Activated naive CD4-positive, alpha-beta T cell treated with anti-CD3 and anti-CD28 coated beads for 36 hours (primary cell): ENCODE measurements at regions of chr1 and their contacts with region 1.

Region 1: DNA sequence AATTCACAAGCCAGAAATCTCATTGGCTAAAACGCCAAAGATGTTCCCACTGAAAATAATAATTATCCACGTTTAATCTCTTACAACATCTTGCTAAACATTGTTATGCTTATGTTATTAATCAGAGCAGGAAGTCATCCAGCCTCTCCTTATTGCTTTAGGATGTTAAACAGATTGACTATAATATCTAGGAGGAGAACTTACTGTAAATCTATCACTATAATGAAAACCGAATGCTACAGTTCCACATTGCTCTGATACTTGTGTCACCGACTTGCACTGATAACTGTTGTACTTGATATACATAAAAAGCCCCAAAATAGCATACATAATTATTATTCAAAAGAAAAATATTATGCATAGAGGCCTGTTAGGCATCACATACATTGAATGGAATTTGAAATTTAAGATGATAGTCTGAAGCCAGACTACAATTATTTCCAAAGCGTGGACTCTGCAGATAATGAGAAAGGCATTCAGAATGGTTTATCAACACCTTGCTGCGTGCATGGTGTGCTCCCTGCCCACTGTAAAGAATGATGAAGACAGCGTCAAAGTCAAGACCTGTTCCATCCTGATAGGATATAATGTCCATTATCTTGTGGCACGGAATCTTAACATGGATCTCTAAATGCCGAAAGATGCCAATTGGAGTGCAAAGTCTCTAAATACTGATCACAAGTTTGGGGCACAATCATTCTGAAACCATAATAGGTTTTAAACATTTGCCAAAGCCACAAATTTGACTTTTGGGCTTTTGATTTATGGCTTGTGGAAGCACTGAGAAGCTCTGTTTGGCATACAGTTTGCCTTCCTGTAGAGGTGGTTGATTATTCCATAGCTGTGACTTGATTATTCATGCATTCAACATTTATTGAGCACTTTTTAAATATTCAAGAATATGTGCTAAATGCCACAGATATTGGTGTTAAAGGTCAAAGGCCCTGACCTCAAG is 71.3 kb downstream of the CRB1 start:
- DNase-seq: no peak
- H3K4me3 Mint-ChIP-seq: no peak overlapping the region
- H3K27ac Mint-ChIP-seq: no peak overlapping the region
- H3K4me1 Mint-ChIP-seq: peaks cover 3% of the 10 kb centered on the region
- H3K27me3 Mint-ChIP-seq: no peaks in the 10 kb centered on the region

Region 2: DNA sequence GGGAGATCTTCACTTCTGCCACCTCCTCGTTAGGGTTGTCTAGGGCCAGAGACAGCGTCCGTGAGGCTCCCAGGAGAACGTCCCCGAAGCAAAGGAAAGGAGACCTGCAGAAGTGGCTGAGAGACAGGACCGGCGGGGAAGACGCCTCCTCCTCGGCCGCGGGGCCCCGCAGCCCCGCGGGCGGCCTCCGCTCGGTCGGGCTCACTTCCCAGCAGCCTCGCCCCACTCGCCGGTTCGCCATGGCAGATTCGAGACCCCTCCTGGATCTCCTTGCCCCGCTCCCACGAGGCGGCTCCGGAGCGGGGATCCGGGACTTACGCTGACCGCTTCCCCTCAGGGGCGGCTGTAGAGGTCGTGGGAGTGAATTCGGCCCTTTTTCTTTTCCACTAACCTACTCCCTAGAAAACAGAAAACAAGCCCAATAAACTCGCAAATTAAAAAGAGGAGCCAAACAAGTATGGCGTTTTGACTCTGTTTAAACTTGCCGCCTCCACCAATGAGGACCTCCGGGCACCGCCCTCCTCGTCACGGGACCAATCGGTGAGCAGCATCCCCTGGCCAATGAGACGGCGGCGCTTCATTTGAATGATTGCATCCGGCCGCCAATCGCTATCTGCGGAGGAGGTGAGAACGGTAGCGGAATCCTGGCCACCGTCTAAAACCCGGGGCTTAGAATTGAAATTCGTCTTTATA is 193.0 kb before region 1 on chr1 and contains the start of gene ASPM:
- CTCF ChIA-PET with region 1: no interaction called
- intact Hi-C with region 1: no loop called
- DNase-seq: peak; percentile 98
- H3K4me3 Mint-ChIP-seq: peak within 1 kb of the TSS; percentile 85
- H3K27ac Mint-ChIP-seq: peak within 1 kb of the TSS; percentile 93
- H3K4me1 Mint-ChIP-seq: no peaks in the 10 kb centered on the region
- H3K27me3 Mint-ChIP-seq: peaks cover 19% of the 10 kb centered on the region
- total RNA-seq, gene ASPM: 26.4 to 27.6 TPM

Region 3: GRCh38 chr1:197180252-197180878 is 159.0 kb before region 1 on chr1:
- CTCF ChIA-PET with region 1: interaction called, 4 read pairs
- intact Hi-C with region 1: loop called (anchors 1 kb)
- DNase-seq: no peak
- H3K4me3 Mint-ChIP-seq: no peak overlapping the region
- H3K27ac Mint-ChIP-seq: no peak overlapping the region
- H3K4me1 Mint-ChIP-seq: no peaks in the 10 kb centered on the region
- H3K27me3 Mint-ChIP-seq: no peaks in the 10 kb centered on the region

Region 4: GRCh38 chr1:197195100-197195499 is 144.3 kb before region 1 on chr1:
- CTCF ChIA-PET with region 1: no interaction called
- intact Hi-C with region 1: loop called (anchors 5 kb)
- DNase-seq: no peak
- H3K4me3 Mint-ChIP-seq: no peak overlapping the region
- H3K27ac Mint-ChIP-seq: no peak overlapping the region
- H3K4me1 Mint-ChIP-seq: peaks cover 53% of the 10 kb centered on the region
- H3K27me3 Mint-ChIP-seq: no peaks in the 10 kb centered on the region

Region 5: DNA sequence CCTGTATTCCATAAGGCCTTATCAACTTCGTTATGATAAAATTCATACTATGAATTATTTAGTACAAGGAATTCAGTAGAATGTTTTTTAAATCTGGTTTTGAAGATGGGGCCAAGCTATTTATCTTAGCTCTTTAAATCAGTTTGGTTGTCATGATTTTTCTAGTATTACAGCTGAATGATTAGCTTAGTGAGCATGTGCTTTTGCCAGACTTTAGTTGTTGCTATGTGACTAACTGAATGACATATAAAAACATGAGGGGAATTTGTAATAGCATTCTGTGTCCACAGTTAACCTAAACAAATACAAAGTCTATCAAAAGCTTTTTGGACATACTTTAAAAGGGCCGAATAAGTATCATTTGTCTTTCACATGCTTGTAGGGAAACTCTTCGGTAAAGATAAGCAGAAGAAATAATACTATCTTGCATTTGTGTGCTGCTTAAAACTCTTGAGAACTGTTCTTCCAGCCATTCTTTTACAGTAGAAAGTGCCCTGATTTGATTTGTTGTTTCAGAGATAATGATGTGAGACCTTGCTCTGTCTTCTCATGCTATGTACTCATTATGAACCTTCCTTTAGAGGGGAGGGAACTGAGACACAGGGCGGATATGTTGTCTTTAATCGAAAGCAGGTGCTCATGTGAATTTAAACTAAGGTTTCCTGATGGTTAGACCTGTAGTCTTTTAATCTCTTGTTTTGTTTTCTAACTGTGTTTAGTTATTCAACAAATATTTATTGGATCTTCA is 836.2 kb after region 1 on chr1:
- CTCF ChIA-PET with region 1: no interaction called
- intact Hi-C with region 1: no loop called
- DNase-seq: peak; percentile 43
- H3K4me3 Mint-ChIP-seq: peak overlapping the region; percentile 34
- H3K27ac Mint-ChIP-seq: peak overlapping the region; percentile 80
- H3K4me1 Mint-ChIP-seq: peaks cover 91% of the 10 kb centered on the region
- H3K27me3 Mint-ChIP-seq: no peaks in the 10 kb centered on the region